ENCODE measurements at regions of chr9 and their contacts with region 1.

Region 1: GRCh38 chr9:17462869-17463464 is 115.9 kb upstream of the SH3GL2 start:
- DNase-seq: no peak
- ATAC-seq: no peak
- H3K4me3 ChIP-seq: no peak overlapping the region
- H3K27ac ChIP-seq: no peak overlapping the region
- H3K4me1 ChIP-seq: no peaks in the 10 kb centered on the region
- H3K27me3 ChIP-seq: no peaks in the 10 kb centered on the region

Region 2: GRCh38 chr9:15873569-15874177 is 1589.3 kb before region 1 on chr9:
- intact Hi-C with region 1: loop called in 1 of 2 experiments (anchors 5 kb)
- DNase-seq: no peak
- ATAC-seq: no peak
- H3K4me3 ChIP-seq: no peak overlapping the region
- H3K27ac ChIP-seq: no peak overlapping the region
- H3K4me1 ChIP-seq: no peaks in the 10 kb centered on the region
- H3K27me3 ChIP-seq: no peaks in the 10 kb centered on the region

Region 3: GRCh38 chr9:17116400-17116837 is 346.5 kb before region 1 on chr9:
- intact Hi-C with region 1: loop called (anchors 5 kb)
- DNase-seq: no peak
- ATAC-seq: no peak
- H3K4me3 ChIP-seq: no peak overlapping the region
- H3K27ac ChIP-seq: no peak overlapping the region
- H3K4me1 ChIP-seq: peaks cover 2 to 3% of the 10 kb centered on the region in 2 donors
- H3K27me3 ChIP-seq: no peaks in the 10 kb centered on the region

Region 4: GRCh38 chr9:17660158-17660557 is 197.2 kb after region 1 on chr9:
- intact Hi-C with region 1: no loop called
- DNase-seq: no peak
- ATAC-seq: no peak
- H3K4me3 ChIP-seq: no peak overlapping the region
- H3K27ac ChIP-seq: no peak overlapping the region
- H3K4me1 ChIP-seq: no peaks in the 10 kb centered on the region
- H3K27me3 ChIP-seq: no peaks in the 10 kb centered on the region

Measured in aorta (tissue), 5 donors.